ENCODE measurements at regions of chr1 and their contacts with region 1.

Region 1: DNA sequence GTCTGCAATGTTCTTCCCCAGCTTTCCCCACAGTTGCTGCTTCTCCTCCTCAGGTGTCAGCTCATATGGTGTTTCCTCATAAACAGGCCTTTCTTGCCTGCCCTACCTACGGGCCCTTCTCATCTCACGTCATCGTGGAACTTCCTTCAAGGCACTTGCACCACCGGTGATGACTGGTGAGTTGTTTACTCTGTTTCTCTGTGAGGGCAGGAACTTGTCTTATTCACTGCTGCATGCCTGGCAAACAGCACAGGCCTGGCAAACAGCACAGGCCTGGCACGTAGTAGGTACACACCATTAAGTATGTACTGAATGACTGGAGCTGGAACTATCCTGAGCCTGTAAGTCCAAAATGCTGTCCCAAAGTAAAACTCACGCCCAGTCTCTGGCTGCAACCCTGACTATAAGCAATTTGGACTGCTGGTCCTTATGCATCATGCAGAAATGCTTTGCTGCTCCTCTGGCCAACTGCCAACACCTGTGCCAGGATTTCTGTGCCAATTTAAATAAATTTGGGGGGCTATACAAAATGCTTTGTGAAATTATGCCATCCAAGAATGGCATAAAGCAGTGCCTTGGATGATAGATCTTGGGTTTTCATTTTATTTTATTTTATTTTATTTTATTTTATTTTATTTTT is 25.7 kb downstream of the STK40 start:
- DNase-seq: peak; percentile 6
- H3K4me3 ChIP-seq: no peak overlapping the region
- H3K27ac ChIP-seq: no peak overlapping the region
- H3K4me1 ChIP-seq: no peaks in the 10 kb centered on the region
- H3K27me3 ChIP-seq: no peaks in the 10 kb centered on the region
- CTCF ChIP-seq: no peak

Region 2: GRCh38 chr1:36099681-36100341 is 260.2 kb before region 1 on chr1:
- CTCF ChIA-PET with region 1: no interaction called
- dilution Hi-C with region 1: no loop called
- in situ Hi-C with region 1: no loop called
- intact Hi-C with region 1: no loop called
- DNase-seq: peak; percentile 49
- H3K4me3 ChIP-seq: no peak overlapping the region
- H3K27ac ChIP-seq: no peak overlapping the region
- H3K4me1 ChIP-seq: peaks cover 4% of the 10 kb centered on the region
- H3K27me3 ChIP-seq: no peaks in the 10 kb centered on the region
- CTCF ChIP-seq: peak; percentile 86 to 96

Region 3: GRCh38 chr1:36217670-36218069 is 142.4 kb before region 1 on chr1:
- CTCF ChIA-PET with region 1: no interaction called
- dilution Hi-C with region 1: no loop called
- in situ Hi-C with region 1: no loop called
- intact Hi-C with region 1: no loop called
- DNase-seq: peak; percentile 27
- H3K4me3 ChIP-seq: no peak overlapping the region
- H3K27ac ChIP-seq: no peak overlapping the region
- H3K4me1 ChIP-seq: peaks cover under 1% of the 10 kb centered on the region
- H3K27me3 ChIP-seq: no peaks in the 10 kb centered on the region
- CTCF ChIP-seq: peak in 1 of 2 donors; percentile 44

Region 4: GRCh38 chr1:36385410-36386257 is 25.6 kb after region 1 on chr1 and contains the start of gene STK40:
- CTCF ChIA-PET with region 1: no interaction called
- dilution Hi-C with region 1: loop called (anchors 5 kb)
- in situ Hi-C with region 1: no loop called
- intact Hi-C with region 1: no loop called
- DNase-seq: peak; percentile 99
- H3K4me3 ChIP-seq: peak within 1 kb of the TSS; percentile 66 to 79 (median 70)
- H3K27ac ChIP-seq: peak within 1 kb of the TSS; percentile 100
- H3K4me1 ChIP-seq: peaks cover 31% of the 10 kb centered on the region
- H3K27me3 ChIP-seq: no peaks in the 10 kb centered on the region
- CTCF ChIP-seq: no peak
- total RNA-seq, gene STK40: 13.2 to 21.3 TPM

Region 5: GRCh38 chr1:36440646-36441319 is 80.8 kb after region 1 on chr1:
- CTCF ChIA-PET with region 1: no interaction called
- dilution Hi-C with region 1: loop called (anchors 5 kb)
- in situ Hi-C with region 1: no loop called
- intact Hi-C with region 1: no loop called
- DNase-seq: no peak
- H3K4me3 ChIP-seq: no peak overlapping the region
- H3K27ac ChIP-seq: no peak overlapping the region
- H3K4me1 ChIP-seq: peaks cover 19% of the 10 kb centered on the region
- H3K27me3 ChIP-seq: no peaks in the 10 kb centered on the region
- CTCF ChIP-seq: no peak

Measured in mammary epithelial cell (primary cell).